Activated CD4-positive, alpha-beta T cell treated with anti-CD3 and anti-CD28 coated beads, Interleukin-2, amount 10 ng/mL, durations not matched to agents 7 days and 5 days (primary cell): ENCODE measurements at regions of chr5 and their contacts with region 1.

Region 1: GRCh38 chr5:139293504-139294373 is at the start of gene MATR3:
- DNase-seq: peak; percentile 95
- H3K4me3 Mint-ChIP-seq: peak within 1 kb of the TSS; percentile 98
- H3K27ac Mint-ChIP-seq: peak within 1 kb of the TSS; percentile 99
- H3K4me1 Mint-ChIP-seq: peaks cover 40% of the 10 kb centered on the region
- H3K27me3 Mint-ChIP-seq: no peaks in the 10 kb centered on the region
- total RNA-seq, gene MATR3: 168 to 222 TPM

Region 2: GRCh38 chr5:139197710-139198669 is 95.7 kb before region 1 on chr5 and contains the start of gene SIL1:
- CTCF ChIA-PET with region 1: no interaction called
- POLR2A ChIA-PET with region 1: no interaction called
- DNase-seq: peak; percentile 93
- H3K4me3 Mint-ChIP-seq: peak within 1 kb of the TSS; percentile 89
- H3K27ac Mint-ChIP-seq: peak within 1 kb of the TSS; percentile 89
- H3K4me1 Mint-ChIP-seq: peaks cover 23% of the 10 kb centered on the region
- H3K27me3 Mint-ChIP-seq: no peaks in the 10 kb centered on the region
- total RNA-seq, gene SIL1: 9.4 to 9.7 TPM

Region 3: DNA sequence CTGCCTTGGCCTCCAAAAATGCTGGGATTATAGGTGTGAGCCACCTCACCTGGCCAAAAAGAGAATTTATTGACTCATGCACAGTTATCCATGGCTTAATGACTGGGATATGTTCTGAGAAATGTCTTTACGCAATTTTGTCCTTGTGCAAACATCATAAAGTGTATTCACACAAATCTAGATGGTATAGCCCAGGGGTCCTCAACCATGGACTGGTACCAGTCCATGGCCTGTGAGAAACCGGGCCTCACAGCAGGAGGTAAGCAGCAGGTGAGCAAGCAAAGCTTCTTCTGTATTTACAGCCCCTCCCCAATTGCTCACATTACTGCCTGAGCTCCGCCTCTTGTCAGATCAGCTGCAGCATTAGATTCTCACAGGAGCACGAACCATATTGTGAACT is 83.2 kb before region 1 on chr5:
- CTCF ChIA-PET with region 1: no interaction called
- POLR2A ChIA-PET with region 1: interaction called, 10 read pairs
- DNase-seq: no peak
- H3K4me3 Mint-ChIP-seq: no peak overlapping the region
- H3K27ac Mint-ChIP-seq: no peak overlapping the region
- H3K4me1 Mint-ChIP-seq: no peaks in the 10 kb centered on the region
- H3K27me3 Mint-ChIP-seq: peaks cover 4% of the 10 kb centered on the region

Region 4: GRCh38 chr5:139273572-139274289 is 20.0 kb before region 1 on chr5:
- CTCF ChIA-PET with region 1: interaction called, 4 read pairs
- POLR2A ChIA-PET with region 1: interaction called, 12 read pairs
- DNase-seq: peak; percentile 86
- H3K4me3 Mint-ChIP-seq: peak overlapping the region; percentile 86
- H3K27ac Mint-ChIP-seq: peak overlapping the region; percentile 88
- H3K4me1 Mint-ChIP-seq: peaks cover 54% of the 10 kb centered on the region
- H3K27me3 Mint-ChIP-seq: peaks cover 3% of the 10 kb centered on the region